Activated T-helper 1 cell treated with anti-CD3 and anti-CD28 coated beads, Interleukin-12 subunit alpha, Interleukin-12 subunit beta, Interleukin-2, Interleukin-4 antibody, amounts not matched to agents 30 ng/mL and 10 ng/mL and 1 ng/mL, durations not matched to agents 14 hours and 24 hours and 36 hours (primary cell): ENCODE measurements at regions of chr6 and their contacts with region 1.

Region 1: DNA sequence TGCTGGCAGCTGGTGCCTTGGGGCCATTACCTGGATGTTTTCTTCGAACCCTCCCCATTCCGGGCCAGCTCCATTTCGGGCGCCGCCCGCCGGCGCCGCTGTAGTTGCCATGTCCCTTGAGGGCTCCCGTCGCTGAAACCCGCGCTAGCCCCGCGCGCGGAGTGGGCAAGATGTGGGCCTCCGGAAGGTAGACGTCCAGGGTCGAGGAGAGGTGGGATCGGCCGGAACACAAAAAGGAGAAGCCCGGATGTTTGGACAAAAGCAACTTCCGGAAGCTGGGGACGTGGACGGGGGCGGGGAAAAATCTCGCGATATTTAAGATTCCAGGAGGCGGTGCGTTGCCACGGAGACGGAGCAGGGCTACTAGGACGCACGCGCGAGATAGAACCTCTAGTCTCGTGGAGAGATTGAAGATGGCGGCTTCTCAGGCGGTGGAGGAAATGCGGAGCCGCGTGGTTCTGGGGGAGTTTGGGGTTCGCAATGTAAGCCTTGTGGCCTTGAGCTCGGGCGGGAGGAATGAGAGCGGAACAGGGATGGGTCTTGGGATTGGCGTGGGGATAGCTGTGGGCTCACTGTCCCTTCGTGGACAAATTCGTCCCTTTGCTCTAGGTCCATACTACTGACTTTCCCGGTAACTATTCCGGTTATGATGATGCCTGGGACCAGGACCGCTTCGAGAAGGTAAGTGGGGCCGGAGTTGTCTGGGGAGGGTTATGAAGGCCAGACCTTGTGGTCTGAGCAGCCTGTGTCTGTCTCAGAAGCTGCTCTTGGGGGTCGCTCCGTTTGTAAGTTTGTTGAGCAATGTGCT is at the starts of genes POLR1C and YIPF3:
- DNase-seq: peak; percentile 95
- H3K4me3 Mint-ChIP-seq: no peak within 1 kb of the TSS
- H3K27ac Mint-ChIP-seq: no peak within 1 kb of the TSS
- H3K4me1 Mint-ChIP-seq: peaks cover 20% of the 10 kb centered on the region
- H3K27me3 Mint-ChIP-seq: no peaks in the 10 kb centered on the region
- total RNA-seq, gene POLR1C: 85.8 and 98.0 TPM in 2 replicates
- total RNA-seq, gene YIPF3: 60.2 and 62.5 TPM in 2 replicates

Region 2: GRCh38 chr6:43053545-43054205 is 463.2 kb before region 1 on chr6 and contains the start of gene CUL7:
- intact Hi-C with region 1: loop called (anchors 2 kb)
- DNase-seq: peak; percentile 89
- H3K4me3 Mint-ChIP-seq: peak within 1 kb of the TSS; percentile 99
- H3K27ac Mint-ChIP-seq: peak within 1 kb of the TSS; percentile 98
- H3K4me1 Mint-ChIP-seq: peaks cover 53% of the 10 kb centered on the region
- H3K27me3 Mint-ChIP-seq: no peaks in the 10 kb centered on the region
- total RNA-seq, gene CUL7: 20.1 and 23.2 TPM in 2 replicates

Region 3: GRCh38 chr6:43427406-43428111 is 89.3 kb before region 1 on chr6 and contains the start of gene ABCC10:
- intact Hi-C with region 1: loop called (anchors 1 kb)
- DNase-seq: peak; percentile 93
- H3K4me3 Mint-ChIP-seq: peak within 1 kb of the TSS; percentile 96
- H3K27ac Mint-ChIP-seq: peak within 1 kb of the TSS; percentile 96
- H3K4me1 Mint-ChIP-seq: peaks cover 17% of the 10 kb centered on the region
- H3K27me3 Mint-ChIP-seq: no peaks in the 10 kb centered on the region
- total RNA-seq, gene ABCC10: 40.5 and 43.6 TPM in 2 replicates

Region 4: GRCh38 chr6:43570876-43571441 is 54.1 kb after region 1 on chr6:
- intact Hi-C with region 1: loop called (anchors 1 kb)
- DNase-seq: peak; percentile 14
- H3K4me3 Mint-ChIP-seq: peak overlapping the region; percentile 12
- H3K27ac Mint-ChIP-seq: peak overlapping the region; percentile 83
- H3K4me1 Mint-ChIP-seq: peaks cover 26% of the 10 kb centered on the region
- H3K27me3 Mint-ChIP-seq: no peaks in the 10 kb centered on the region

Region 5: DNA sequence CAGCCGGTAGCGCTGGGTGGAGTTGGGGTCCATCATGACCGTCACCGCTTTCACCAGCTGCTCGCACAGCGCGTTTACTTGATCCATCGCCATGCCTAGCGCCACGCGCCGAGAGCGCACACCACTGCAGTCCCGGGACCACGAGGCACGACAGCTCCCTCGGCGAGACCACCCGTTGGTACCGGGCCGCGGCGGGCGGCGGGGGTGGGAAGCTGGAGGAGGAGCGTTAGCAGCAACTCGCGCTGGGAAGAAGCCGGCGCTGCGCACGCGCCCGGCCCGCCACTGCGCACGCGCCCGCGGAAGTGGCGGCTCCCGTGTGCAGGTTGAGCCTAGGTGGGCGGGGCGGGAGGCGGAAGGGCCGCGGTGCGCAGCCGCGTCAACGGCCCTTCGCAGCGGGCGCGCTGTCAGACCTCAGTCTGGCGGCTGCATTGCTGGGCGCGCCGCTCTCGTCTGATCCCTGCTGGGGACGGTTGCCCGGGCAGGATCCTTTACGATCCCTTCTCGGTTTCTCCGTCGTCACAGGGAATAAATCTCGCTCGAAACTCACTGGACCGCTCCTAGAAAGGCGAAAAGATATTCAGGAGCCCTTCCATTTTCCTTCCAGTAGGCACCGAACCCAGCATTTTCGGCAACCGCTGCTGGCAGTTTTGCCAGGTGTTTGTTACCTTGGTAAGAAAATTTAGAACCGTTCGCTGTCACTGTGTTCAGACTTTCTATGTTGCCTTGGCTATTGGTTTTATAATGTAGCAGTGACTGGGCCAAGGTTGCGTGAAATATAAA is 59.1 kb after region 1 on chr6 and contains the starts of genes POLH and XPO5:
- intact Hi-C with region 1: loop called (anchors 1 kb)
- DNase-seq: peak; percentile 90
- H3K4me3 Mint-ChIP-seq: peak within 1 kb of the TSS; percentile 91
- H3K27ac Mint-ChIP-seq: peak within 1 kb of the TSS; percentile 86
- H3K4me1 Mint-ChIP-seq: peaks cover 43% of the 10 kb centered on the region
- H3K27me3 Mint-ChIP-seq: no peaks in the 10 kb centered on the region
- total RNA-seq, gene POLH: 35.7 and 39.1 TPM in 2 replicates
- total RNA-seq, gene XPO5: 135 and 149 TPM in 2 replicates